K562 (cell line): ENCODE measurements at regions of chr1 and their contacts with region 1.

Region 1: DNA sequence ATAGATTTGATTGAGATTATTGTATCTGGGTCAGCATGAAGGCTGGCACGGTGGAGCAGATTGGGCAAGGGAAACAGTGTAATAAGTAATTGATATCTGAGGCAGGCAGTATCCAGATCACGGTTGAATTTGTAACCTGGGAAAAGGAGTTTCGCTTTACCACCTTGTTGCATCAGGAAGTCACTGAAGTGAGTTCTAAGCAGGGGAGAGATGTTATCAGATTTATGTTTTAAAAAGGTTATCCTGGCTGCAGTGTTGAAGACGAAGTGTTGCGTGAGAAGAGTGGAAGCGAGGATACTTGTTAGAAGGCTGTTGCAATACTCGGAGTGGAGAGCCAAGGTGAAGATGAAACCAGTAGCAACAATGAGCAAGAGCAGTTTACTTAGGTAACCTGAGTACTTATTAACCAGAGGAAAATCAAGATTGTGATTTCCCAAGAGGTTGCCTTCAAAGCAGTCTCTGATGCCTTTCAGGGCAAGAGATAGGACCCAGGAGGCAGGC is 77.8 kb downstream of the LHX9 start:
- DNase-seq: peak in 2 of 4 experiments; percentile 10 to 34
- ATAC-seq: peak; percentile 78
- H3K4me3 ChIP-seq: peak overlapping the region; percentile 41
- H3K27ac ChIP-seq: peak overlapping the region; percentile 73
- H3K4me1 ChIP-seq: no peaks in the 10 kb centered on the region
- H3K27me3 ChIP-seq: no peaks in the 10 kb centered on the region
- CTCF ChIP-seq: no peak
- EP300 ChIP-seq: peak; percentile 67; the same call in 1 of the 2 replicates
- POLR2A ChIP-seq: no peak
- RAD21 ChIP-seq: no peak

Region 2: DNA sequence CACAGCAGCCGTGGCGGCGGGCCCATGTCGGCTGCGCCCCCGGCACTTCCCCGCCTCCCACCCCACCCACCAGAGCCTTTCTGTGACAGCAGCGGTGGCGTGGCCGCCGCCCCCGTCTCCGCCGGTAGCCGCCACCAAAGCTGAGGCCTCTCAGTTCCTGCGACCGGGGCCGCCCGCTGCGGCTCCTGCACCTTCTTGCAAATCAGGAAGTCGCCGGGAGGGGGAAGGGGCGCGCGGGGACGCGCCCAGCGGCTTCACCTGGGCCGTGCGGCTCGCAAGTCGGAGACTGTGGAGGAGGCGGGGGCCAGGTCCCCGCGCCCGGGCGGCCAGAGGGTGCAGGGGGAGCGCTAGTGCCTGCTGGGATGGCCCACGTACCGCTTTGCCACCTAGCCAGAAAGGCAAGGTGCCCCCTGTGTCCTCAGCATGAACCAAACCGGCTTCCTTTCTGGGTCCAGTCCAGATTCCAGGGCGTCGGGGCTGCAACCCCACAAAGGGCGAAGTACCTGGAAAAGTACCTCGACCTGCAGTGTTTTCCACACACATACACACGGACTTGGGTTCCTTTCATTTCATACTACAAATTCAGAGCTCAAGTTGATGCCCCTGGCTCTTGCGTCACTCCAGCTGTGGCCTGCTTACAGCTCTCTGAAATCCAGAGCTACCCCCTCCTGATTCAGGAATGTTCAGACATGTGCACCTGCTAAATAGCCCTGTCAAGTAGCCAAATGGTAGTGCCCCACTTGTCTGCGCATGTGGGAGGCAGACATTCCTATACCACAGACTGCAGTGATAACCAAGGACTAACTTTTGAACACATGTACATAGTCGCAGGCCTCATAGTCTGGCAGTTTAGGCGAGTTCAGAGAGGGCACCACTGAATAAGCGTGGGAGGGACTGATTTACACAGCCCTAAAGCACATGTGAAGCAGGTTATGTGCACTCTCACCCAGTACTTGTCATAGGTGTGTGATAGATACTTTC is 219.4 kb before region 1 on chr1 and contains the start of gene DENND1B:
- CTCF ChIA-PET with region 1: no interaction called
- POLR2A ChIA-PET with region 1: interaction called, 3 read pairs
- in situ Hi-C with region 1: no loop called
- intact Hi-C with region 1: loop called (anchors 10 kb)
- DNase-seq: peak; percentile 74 to 92 (median 80)
- ATAC-seq: peak; percentile 81
- H3K4me3 ChIP-seq: peak within 1 kb of the TSS; percentile 71
- H3K27ac ChIP-seq: peak within 1 kb of the TSS; percentile 83
- H3K4me1 ChIP-seq: peaks cover 21 to 36% of the 10 kb centered on the region in 2 experiments
- H3K27me3 ChIP-seq: no peaks in the 10 kb centered on the region
- CTCF ChIP-seq: peak in 2 of 3 experiments; percentile 13 to 28; a peak in 2 of 6 replicates
- EP300 ChIP-seq: no peak
- POLR2A ChIP-seq: peak; percentile 66
- RAD21 ChIP-seq: peak; percentile 10 to 20; a peak in 1 of 4 replicates
- polyA plus RNA-seq, gene DENND1B: 2.1 to 3.3 TPM

Region 3: GRCh38 chr1:198015309-198015708 is 20.4 kb after region 1 on chr1:
- CTCF ChIA-PET with region 1: no interaction called
- POLR2A ChIA-PET with region 1: interaction called, 4 read pairs
- in situ Hi-C with region 1: no loop called
- intact Hi-C with region 1: loop called (anchors 1 kb)
- DNase-seq: no peak
- ATAC-seq: no peak
- H3K4me3 ChIP-seq: no peak overlapping the region
- H3K27ac ChIP-seq: no peak overlapping the region
- H3K4me1 ChIP-seq: no peaks in the 10 kb centered on the region
- H3K27me3 ChIP-seq: 0 out of 5 replicates have a peak, but pooled peaks cover 0 to 5% of the 10 kb centered on the region in 2 experiments
- CTCF ChIP-seq: no peak
- EP300 ChIP-seq: no peak
- POLR2A ChIP-seq: no peak
- RAD21 ChIP-seq: no peak

Region 4: DNA sequence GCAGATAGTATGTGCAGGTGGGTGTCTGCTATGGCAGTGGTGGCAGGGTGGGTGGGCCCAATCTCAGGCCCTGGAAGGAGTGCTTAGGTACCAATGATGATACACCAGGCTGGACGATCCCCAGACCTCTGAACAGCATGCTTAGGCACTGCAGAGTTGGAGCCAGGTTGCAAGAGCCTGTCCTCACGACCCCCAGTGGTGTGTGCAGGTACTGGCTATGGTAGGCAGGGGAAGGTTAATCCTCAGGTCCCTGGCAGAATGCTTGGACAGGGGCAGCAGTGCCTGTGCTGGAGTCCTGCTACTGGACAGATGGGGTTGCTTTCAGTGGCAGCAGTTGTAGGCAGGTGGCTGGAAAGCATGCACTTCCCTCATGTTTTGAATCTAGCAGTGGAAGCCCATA is 61.3 kb after region 1 on chr1:
- CTCF ChIA-PET with region 1: no interaction called
- POLR2A ChIA-PET with region 1: no interaction called
- in situ Hi-C with region 1: no loop called
- intact Hi-C with region 1: no loop called
- DNase-seq: peak in 2 of 4 experiments; percentile 19 to 31
- ATAC-seq: peak; percentile 98
- H3K4me3 ChIP-seq: no peak overlapping the region
- H3K27ac ChIP-seq: no peak overlapping the region
- H3K4me1 ChIP-seq: no peaks in the 10 kb centered on the region
- H3K27me3 ChIP-seq: no peaks in the 10 kb centered on the region
- CTCF ChIP-seq: peak; percentile 47 to 60 (median 60)
- EP300 ChIP-seq: no peak
- POLR2A ChIP-seq: no peak
- RAD21 ChIP-seq: peak in 1 of 2 experiments; percentile 52; a peak in 2 of 4 replicates

Region 5: GRCh38 chr1:198275597-198275996 is 280.6 kb after region 1 on chr1:
- CTCF ChIA-PET with region 1: no interaction called
- POLR2A ChIA-PET with region 1: interaction called, 3 read pairs
- in situ Hi-C with region 1: no loop called
- intact Hi-C with region 1: loop called (anchors 10 kb)
- DNase-seq: no peak
- ATAC-seq: no peak
- H3K4me3 ChIP-seq: no peak overlapping the region
- H3K27ac ChIP-seq: no peak overlapping the region
- H3K4me1 ChIP-seq: no peaks in the 10 kb centered on the region; a peak in 2 of 5 replicates
- H3K27me3 ChIP-seq: no peaks in the 10 kb centered on the region
- CTCF ChIP-seq: peak in 1 of 3 experiments; percentile 33; a peak in 2 of 6 replicates
- EP300 ChIP-seq: no peak
- POLR2A ChIP-seq: no peak
- RAD21 ChIP-seq: no peak